MCF 10A (cell line): ENCODE measurements at regions of chr3 and their contacts with region 1.

Region 1: GRCh38 chr3:137020315-137020714 is 62.5 kb downstream of the IL20RB start:
- DNase-seq: no peak
- H3K4me3 Mint-ChIP-seq: no peak overlapping the region
- H3K27ac Mint-ChIP-seq: no peak overlapping the region
- H3K4me1 Mint-ChIP-seq: no peaks in the 10 kb centered on the region
- H3K27me3 Mint-ChIP-seq: no peaks in the 10 kb centered on the region
- CTCF ChIP-seq: no peak

Region 2: DNA sequence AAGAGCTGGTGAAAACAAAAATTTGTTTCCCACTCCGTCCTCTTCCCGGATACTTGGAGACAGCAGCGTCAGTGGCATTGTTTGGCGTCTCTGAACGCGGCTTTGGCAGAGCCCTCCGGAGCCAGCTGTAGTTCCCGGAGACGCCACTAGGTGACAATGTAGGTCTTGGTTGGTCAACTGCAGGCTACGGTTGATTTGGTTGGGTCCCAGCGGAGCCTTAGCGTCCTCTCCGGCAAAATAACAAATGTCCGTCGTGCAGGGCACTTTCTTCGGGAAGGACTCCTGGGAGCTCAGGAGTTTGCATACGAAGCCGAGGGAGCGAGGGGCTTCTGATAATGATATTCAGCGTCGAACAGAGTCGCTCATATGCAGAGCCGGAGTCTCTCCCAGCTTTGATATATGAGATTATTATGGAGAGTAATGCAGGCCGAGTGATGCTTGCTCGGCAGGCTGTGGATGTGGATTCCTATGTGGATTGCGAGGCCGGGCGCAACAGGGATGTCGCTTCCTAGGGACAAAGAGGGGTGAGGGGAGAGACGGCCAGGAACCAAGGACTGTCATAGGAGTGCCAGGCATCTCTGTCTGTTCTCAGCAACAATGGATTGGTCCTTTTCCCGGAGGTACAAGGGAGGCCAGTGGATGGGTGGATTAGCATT is 12.3 kb after region 1 on chr3:
- CTCF ChIA-PET with region 1: interaction called, 12 read pairs
- POLR2A ChIA-PET with region 1: interaction called, 4 read pairs
- intact Hi-C with region 1: no loop called
- DNase-seq: peak; percentile 57
- H3K4me3 Mint-ChIP-seq: no peak overlapping the region
- H3K27ac Mint-ChIP-seq: peak overlapping the region; percentile 36
- H3K4me1 Mint-ChIP-seq: peaks cover 8% of the 10 kb centered on the region
- H3K27me3 Mint-ChIP-seq: no peaks in the 10 kb centered on the region
- CTCF ChIP-seq: peak; percentile 77